HCT116 (cell line): ENCODE measurements at regions of chr6 and their contacts with region 1.

Region 1: GRCh38 chr6:7238900-7239589 is 74.0 kb downstream of the SSR1 start:
- DNase-seq: peak; percentile 77
- ATAC-seq: peak; percentile 88
- H3K4me3 ChIP-seq: no peak overlapping the region
- H3K27ac ChIP-seq: no peak overlapping the region
- H3K4me1 ChIP-seq: peaks cover 62 to 79% of the 10 kb centered on the region in 2 experiments
- H3K27me3 ChIP-seq: no peaks in the 10 kb centered on the region
- CTCF ChIP-seq: peak; percentile 74 to 85 (median 82)
- POLR2A ChIP-seq: no peak
- RAD21 ChIP-seq: peak; percentile 95

Region 2: DNA sequence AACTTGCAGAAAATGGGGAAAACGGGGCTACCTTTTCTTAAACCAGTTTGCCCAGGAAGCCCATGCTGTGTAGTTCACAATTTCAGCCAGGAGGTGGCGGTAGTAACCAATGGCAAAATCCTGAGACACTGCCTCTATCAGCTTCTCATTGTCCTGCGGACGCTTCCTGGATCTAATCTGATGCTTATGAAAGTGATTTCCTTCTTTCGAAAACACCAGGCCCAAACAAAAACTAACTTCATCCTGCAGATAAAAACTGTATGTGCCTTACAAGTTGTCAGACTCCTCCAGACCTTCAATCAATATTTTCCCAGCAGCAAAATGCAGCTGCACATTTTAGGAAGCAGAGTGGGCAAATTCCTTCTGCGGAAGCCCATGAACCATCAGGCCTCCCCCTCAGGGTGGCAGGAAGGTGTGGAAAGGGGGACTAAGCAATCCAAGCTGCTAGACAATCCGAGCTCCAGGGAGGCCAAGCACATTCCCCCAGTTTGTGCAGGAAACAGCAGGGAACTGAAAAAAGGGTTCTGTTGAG is 562.1 kb before region 1 on chr6:
- CTCF ChIA-PET with region 1: interaction called, 11 read pairs
- POLR2A ChIA-PET with region 1: no interaction called
- RAD21 ChIA-PET with region 1: no interaction called
- intact Hi-C with region 1: loop called (anchors 1 kb)
- DNase-seq: peak; percentile 65
- ATAC-seq: peak; percentile 92
- H3K4me3 ChIP-seq: no peak overlapping the region
- H3K27ac ChIP-seq: no peak overlapping the region
- H3K4me1 ChIP-seq: peaks cover 0 to 21% of the 10 kb centered on the region in 2 experiments; a peak in 2 of 4 replicates
- H3K27me3 ChIP-seq: no peaks in the 10 kb centered on the region
- CTCF ChIP-seq: peak; percentile 85 to 92 (median 92)
- POLR2A ChIP-seq: no peak
- RAD21 ChIP-seq: peak; percentile 97

Region 3: DNA sequence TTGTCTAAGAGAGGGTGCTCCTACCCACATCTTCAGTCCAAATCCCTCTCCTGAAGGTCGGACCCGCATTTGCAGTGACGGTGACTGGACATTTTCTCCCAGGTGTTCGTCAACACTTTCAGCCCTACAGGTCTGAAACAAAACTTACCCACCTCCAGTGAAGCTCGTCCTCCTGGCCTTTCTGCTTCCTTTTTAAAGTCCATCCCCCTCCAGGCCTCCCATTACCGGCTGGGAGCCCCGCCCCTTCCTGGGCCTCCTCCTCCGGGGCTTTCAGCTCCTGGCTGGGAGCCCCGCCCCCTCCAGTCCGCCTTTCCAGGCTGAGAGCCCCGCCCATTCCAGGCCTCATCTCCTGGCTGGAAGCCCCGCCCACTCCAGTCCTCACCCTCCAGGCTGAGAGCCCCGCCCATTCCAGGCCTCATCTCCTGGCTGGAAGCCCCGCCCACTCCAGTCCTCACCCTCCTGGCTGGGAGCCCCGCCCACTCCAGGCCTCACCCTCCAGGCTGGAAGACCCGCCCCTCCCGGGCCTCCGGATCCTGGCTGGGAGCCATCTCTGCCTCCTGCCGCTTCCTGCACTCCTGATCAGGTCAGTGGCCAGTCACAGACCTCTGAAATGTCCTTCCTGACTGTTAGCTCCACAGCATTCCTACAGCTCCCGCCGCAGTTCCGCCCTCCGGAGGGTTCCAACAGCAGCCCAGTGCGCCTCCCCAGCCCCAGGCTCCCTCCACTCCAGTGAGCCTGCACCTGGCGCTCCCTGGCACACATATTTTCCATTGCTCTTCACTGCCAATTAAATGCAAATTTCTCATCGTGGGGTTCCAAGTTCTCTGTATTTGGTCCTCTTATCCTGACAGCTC is 552.1 kb before region 1 on chr6:
- CTCF ChIA-PET with region 1: interaction called, 9 read pairs
- POLR2A ChIA-PET with region 1: no interaction called
- RAD21 ChIA-PET with region 1: no interaction called
- intact Hi-C with region 1: loop called (anchors 5 kb)
- DNase-seq: peak; percentile 93
- ATAC-seq: peak; percentile 94
- H3K4me3 ChIP-seq: peak overlapping the region; percentile 67 to 69
- H3K27ac ChIP-seq: peak overlapping the region; percentile 68
- H3K4me1 ChIP-seq: peaks cover 0 to 19% of the 10 kb centered on the region in 2 experiments; a peak in 3 of 4 replicates
- H3K27me3 ChIP-seq: no peaks in the 10 kb centered on the region
- CTCF ChIP-seq: no peak
- POLR2A ChIP-seq: peak; percentile 36
- RAD21 ChIP-seq: no peak

Region 4: GRCh38 chr6:6724539-6725467 is 514.2 kb before region 1 on chr6:
- CTCF ChIA-PET with region 1: interaction called, 11 read pairs
- POLR2A ChIA-PET with region 1: interaction called, 3 read pairs
- RAD21 ChIA-PET with region 1: interaction called in 1 of 2 experiments, 3 read pairs
- intact Hi-C with region 1: loop called (anchors 1 kb)
- DNase-seq: peak; percentile 58
- ATAC-seq: peak; percentile 85
- H3K4me3 ChIP-seq: no peak overlapping the region
- H3K27ac ChIP-seq: no peak overlapping the region; the same call in 1 of the 2 replicates
- H3K4me1 ChIP-seq: peaks cover 0 to 20% of the 10 kb centered on the region in 2 experiments; a peak in 2 of 4 replicates
- H3K27me3 ChIP-seq: no peaks in the 10 kb centered on the region
- CTCF ChIP-seq: peak; percentile 59 to 78 (median 75)
- POLR2A ChIP-seq: no peak
- RAD21 ChIP-seq: peak; percentile 95

Region 5: DNA sequence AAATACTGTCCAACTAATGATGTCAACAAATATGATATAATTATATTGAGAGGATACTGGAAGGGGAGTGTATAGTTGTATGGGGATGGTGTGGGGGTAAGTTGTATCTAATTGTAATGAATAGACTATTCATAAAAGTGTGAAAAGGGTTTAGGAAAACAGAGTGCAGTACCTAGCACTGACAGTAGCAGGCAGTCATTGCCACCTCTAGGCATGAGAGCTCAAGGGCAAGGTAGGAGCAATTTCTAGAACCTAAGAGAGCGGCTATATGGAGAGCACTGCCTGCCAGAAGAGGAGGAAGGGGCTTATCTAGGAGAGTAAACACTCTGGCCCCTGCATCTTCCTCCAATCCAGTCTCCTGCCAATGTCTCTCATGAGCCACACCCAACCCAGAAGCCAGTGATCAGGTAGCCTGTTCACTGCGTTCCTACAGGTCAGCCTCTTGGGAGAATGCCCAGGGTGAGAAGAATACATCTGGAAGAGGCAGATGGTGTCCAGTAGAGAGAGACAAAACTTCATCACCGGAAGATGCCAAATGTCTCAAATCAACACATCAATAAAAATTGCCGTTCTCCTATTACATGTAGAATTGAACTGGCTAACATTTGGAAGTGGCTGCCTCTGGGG is 450.5 kb before region 1 on chr6:
- CTCF ChIA-PET with region 1: interaction called, 4 read pairs
- POLR2A ChIA-PET with region 1: no interaction called
- RAD21 ChIA-PET with region 1: no interaction called
- intact Hi-C with region 1: loop called (anchors 10 kb)
- DNase-seq: no peak
- ATAC-seq: peak; percentile 75
- H3K4me3 ChIP-seq: no peak overlapping the region
- H3K27ac ChIP-seq: no peak overlapping the region
- H3K4me1 ChIP-seq: peaks cover 17 to 80% of the 10 kb centered on the region in 2 experiments; a peak in 3 of 4 replicates
- H3K27me3 ChIP-seq: no peaks in the 10 kb centered on the region
- CTCF ChIP-seq: peak; percentile 32 to 82 (median 81); a peak in 5 of 6 replicates
- POLR2A ChIP-seq: no peak
- RAD21 ChIP-seq: peak; percentile 59

Region 6: DNA sequence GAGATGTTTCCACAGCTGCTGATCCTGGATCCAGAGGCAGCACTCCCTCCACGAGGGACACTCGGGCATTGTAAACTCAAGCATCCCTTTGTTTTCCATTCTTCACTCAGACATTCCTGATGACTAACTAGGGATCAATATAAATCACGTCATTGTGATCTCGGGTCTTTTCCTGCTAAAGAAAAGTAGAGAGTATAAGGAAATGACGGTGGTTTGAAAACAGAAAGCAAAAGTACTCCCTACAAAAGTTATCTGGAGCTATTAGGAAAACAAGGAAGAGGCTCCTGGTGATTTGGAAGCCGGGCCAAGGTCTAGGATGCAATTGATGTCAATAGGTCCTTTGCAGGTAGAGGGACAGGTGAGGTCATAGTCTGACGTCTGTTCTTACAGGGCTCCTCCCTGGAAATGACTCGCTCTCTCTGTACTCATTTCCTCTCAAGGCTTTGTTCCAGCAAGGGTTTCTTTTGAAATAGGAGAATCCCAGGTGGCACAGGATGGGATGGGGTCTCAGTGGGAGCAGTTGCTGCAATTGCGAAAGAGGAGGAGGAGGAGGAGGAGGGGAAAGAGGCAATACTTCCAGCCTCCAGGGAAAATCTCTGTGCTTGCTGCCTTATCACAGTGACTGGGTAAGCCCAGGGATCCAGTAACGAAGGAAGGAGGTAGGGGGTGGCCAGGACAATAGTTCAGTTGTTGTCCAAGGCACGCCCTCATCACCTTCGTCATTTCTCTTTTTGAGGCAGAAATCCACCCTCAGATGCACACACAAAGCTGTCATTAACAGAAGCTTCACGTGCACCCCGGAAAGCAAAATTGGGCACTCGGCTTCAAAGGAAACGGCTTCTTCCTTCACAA is 427.7 kb before region 1 on chr6:
- CTCF ChIA-PET with region 1: no interaction called
- POLR2A ChIA-PET with region 1: no interaction called
- RAD21 ChIA-PET with region 1: no interaction called
- intact Hi-C with region 1: loop called (anchors 5 kb)
- DNase-seq: peak; percentile 100
- ATAC-seq: peak; percentile 86
- H3K4me3 ChIP-seq: peak overlapping the region; percentile 22 to 31
- H3K27ac ChIP-seq: peak overlapping the region; percentile 71
- H3K4me1 ChIP-seq: peaks cover 32 to 95% of the 10 kb centered on the region in 2 experiments
- H3K27me3 ChIP-seq: no peaks in the 10 kb centered on the region
- CTCF ChIP-seq: no peak
- POLR2A ChIP-seq: peak; percentile 32
- RAD21 ChIP-seq: no peak

Region 7: DNA sequence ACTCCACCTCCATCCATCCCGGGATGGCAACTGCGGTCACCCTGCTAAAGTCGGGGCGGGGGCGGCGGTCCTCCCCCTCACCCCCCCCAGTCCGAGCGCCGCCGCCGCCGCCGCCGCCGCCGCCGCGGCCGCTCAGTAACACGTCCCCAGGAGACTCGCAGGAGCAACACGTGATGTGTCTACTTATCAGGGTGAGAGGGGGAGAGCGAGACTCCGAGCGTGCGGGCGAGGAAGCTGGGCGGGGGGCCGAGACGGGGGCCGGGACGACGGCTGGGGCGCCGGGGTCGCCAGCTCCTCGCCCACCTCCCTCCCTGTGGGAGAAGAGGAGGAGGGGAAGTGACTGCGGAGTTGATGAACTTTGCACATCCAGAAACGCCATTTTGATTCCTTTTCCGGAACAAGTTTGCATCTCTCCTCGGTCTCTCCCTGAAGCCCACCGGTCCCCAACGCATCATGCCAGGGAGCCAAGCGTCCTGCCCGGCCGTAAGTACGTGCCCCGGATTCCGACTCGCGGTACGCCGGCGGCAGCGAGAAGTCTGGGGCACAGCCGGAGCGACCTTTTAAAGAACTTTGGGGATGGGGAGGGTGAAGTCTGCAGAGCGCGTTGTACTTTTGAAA is 131.4 kb before region 1 on chr6 and contains the start of gene RREB1:
- CTCF ChIA-PET with region 1: no interaction called
- POLR2A ChIA-PET with region 1: no interaction called
- RAD21 ChIA-PET with region 1: no interaction called
- intact Hi-C with region 1: loop called (anchors 10 kb)
- DNase-seq: peak; percentile 15
- ATAC-seq: peak; percentile 70
- H3K4me3 ChIP-seq: peak within 1 kb of the TSS; percentile 90 to 95
- H3K27ac ChIP-seq: peak within 1 kb of the TSS; percentile 92
- H3K4me1 ChIP-seq: peaks cover 18 to 41% of the 10 kb centered on the region in 2 experiments
- H3K27me3 ChIP-seq: no peaks in the 10 kb centered on the region
- CTCF ChIP-seq: no peak
- POLR2A ChIP-seq: no peak
- RAD21 ChIP-seq: no peak
- total RNA-seq, gene RREB1: 47.9 TPM